PC-9 (cell line): ENCODE measurements at regions of chr4 and their contacts with region 1.

Region 1: GRCh38 chr4:4479366-4479765 is 62.5 kb downstream of the STX18 start:
- DNase-seq: no peak
- H3K4me3 ChIP-seq: no peak overlapping the region
- H3K27ac ChIP-seq: no peak overlapping the region
- H3K4me1 ChIP-seq: no peaks in the 10 kb centered on the region
- H3K27me3 ChIP-seq: no peaks in the 10 kb centered on the region
- CTCF ChIP-seq: no peak

Region 2: GRCh38 chr4:4507923-4508322 is 28.6 kb after region 1 on chr4:
- CTCF ChIA-PET with region 1: interaction called, 10 read pairs
- POLR2A ChIA-PET with region 1: no interaction called
- intact Hi-C with region 1: no loop called
- DNase-seq: no peak
- H3K4me3 ChIP-seq: no peak overlapping the region
- H3K27ac ChIP-seq: no peak overlapping the region
- H3K4me1 ChIP-seq: no peaks in the 10 kb centered on the region
- H3K27me3 ChIP-seq: no peaks in the 10 kb centered on the region
- CTCF ChIP-seq: peak; percentile 62